ENCODE measurements at regions of chr5 and their contacts with region 1.

Region 1: GRCh38 chr5:72816311-72817145 is at the start of gene TNPO1:
- DNase-seq: peak; percentile 93
- H3K4me3 ChIP-seq: peak within 1 kb of the TSS; percentile 79 to 96 (median 90)
- H3K27ac ChIP-seq: peak within 1 kb of the TSS; percentile 95
- H3K4me1 ChIP-seq: peaks cover 6% of the 10 kb centered on the region
- H3K27me3 ChIP-seq: no peaks in the 10 kb centered on the region
- CTCF ChIP-seq: no peak
- total RNA-seq, gene TNPO1: 126 to 179 TPM

Region 2: DNA sequence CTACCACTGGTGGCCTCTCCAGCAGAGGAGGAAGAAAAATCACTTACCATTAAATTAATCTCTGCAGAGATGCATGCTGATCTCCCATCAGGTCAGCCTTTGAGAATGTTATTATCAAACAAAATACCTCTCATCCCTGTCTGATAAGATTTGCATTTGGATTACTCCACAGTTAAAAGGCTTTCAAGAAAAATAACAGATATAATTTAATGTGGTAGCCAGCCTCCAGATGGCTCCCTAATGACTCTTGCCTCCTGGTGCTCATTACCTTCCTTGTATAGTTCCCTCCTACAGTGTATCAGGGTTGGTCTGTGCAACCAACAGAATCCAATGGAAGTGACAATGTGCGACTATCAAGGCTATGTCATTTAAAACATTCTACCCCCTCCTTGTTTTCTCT is 63.6 kb before region 1 on chr5:
- CTCF ChIA-PET with region 1: no interaction called
- dilution Hi-C with region 1: no loop called
- in situ Hi-C with region 1: no loop called
- intact Hi-C with region 1: loop called (anchors 1 kb)
- DNase-seq: no peak
- H3K4me3 ChIP-seq: no peak overlapping the region
- H3K27ac ChIP-seq: no peak overlapping the region
- H3K4me1 ChIP-seq: no peaks in the 10 kb centered on the region
- H3K27me3 ChIP-seq: no peaks in the 10 kb centered on the region
- CTCF ChIP-seq: peak in 1 of 2 donors; percentile 29

Region 3: DNA sequence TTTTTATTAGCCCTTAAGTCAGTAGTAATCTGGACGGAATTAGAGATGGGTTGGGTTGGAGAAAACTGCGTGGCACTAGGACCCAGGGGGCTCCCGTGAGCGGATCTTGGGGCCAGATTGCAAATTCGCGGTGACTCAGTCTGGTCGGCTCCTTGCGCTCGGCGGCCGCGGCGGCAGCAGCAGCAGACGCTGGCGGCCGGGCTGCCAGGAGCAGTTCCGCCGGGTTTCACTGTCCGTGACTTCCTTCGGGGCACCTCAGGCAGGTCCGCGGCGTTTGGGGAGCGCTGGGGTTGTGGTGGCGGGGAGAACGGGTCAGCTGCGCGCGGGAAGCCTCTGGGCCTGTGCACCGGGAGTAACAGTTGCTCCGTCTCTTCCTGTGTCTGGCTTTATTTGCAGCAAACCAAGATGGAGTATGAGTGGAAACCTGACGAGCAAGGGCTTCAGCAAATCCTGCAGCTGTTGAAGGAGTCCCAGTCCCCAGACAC is 31.5 kb after region 1 on chr5:
- CTCF ChIA-PET with region 1: interaction called, 4 read pairs
- dilution Hi-C with region 1: no loop called
- in situ Hi-C with region 1: no loop called
- intact Hi-C with region 1: loop called (anchors 1 kb)
- DNase-seq: peak; percentile 90
- H3K4me3 ChIP-seq: peak overlapping the region; percentile 88 to 99 (median 94)
- H3K27ac ChIP-seq: peak overlapping the region; percentile 82
- H3K4me1 ChIP-seq: peaks cover 24% of the 10 kb centered on the region
- H3K27me3 ChIP-seq: no peaks in the 10 kb centered on the region
- CTCF ChIP-seq: no peak